ENCODE measurements at regions of chr5 and their contacts with region 1.

Region 1: DNA sequence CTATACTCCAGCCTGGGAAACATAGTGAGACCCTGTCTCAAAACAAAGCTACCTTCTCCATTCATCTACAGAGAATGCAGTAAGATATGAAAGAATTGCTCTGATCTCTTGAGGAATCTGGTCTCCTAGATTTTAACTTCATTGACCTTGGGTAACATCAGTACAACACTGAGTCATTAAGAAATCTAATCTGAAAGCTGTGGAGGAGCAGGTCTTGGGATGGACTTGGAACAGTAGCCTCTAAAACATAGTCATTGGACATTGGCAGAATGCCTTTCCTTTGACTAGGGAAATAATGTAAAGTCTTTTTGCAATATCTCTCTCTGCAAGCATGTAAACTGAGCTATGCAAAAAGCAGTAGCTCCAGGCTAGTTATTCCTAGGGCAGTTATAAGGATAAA is 58.1 kb downstream of the KCNN2 start:
- DNase-seq: no peak
- H3K4me3 ChIP-seq: no peak overlapping the region
- H3K27ac ChIP-seq: no peak overlapping the region
- H3K4me1 ChIP-seq: no peaks in the 10 kb centered on the region
- H3K27me3 ChIP-seq: peaks cover 0 to 2% of the 10 kb centered on the region in 2 experiments
- CTCF ChIP-seq: no peak
- POLR2A ChIP-seq: no peak

Region 2: GRCh38 chr5:113421693-113422092 is 998.3 kb before region 1 on chr5:
- CTCF ChIA-PET with region 1: no interaction called
- POLR2A ChIA-PET with region 1: no interaction called
- dilution Hi-C with region 1: no loop called
- intact Hi-C with region 1: loop called (anchors 10 kb)
- DNase-seq: no peak
- H3K4me3 ChIP-seq: no peak overlapping the region
- H3K27ac ChIP-seq: no peak overlapping the region
- H3K4me1 ChIP-seq: no peaks in the 10 kb centered on the region
- H3K27me3 ChIP-seq: no peaks in the 10 kb centered on the region
- CTCF ChIP-seq: no peak
- POLR2A ChIP-seq: no peak

Region 3: GRCh38 chr5:114435885-114436299 is 15.9 kb after region 1 on chr5:
- CTCF ChIA-PET with region 1: no interaction called
- POLR2A ChIA-PET with region 1: no interaction called
- dilution Hi-C with region 1: no loop called
- intact Hi-C with region 1: no loop called
- DNase-seq: no peak
- H3K4me3 ChIP-seq: no peak overlapping the region
- H3K27ac ChIP-seq: no peak overlapping the region
- H3K4me1 ChIP-seq: no peaks in the 10 kb centered on the region
- H3K27me3 ChIP-seq: no peaks in the 10 kb centered on the region
- CTCF ChIP-seq: no peak
- POLR2A ChIP-seq: no peak

Measured in endothelial cell of umbilical vein (primary cell).